GM12878 (cell line): ENCODE measurements at regions of chr3 and their contacts with region 1.

Region 1: DNA sequence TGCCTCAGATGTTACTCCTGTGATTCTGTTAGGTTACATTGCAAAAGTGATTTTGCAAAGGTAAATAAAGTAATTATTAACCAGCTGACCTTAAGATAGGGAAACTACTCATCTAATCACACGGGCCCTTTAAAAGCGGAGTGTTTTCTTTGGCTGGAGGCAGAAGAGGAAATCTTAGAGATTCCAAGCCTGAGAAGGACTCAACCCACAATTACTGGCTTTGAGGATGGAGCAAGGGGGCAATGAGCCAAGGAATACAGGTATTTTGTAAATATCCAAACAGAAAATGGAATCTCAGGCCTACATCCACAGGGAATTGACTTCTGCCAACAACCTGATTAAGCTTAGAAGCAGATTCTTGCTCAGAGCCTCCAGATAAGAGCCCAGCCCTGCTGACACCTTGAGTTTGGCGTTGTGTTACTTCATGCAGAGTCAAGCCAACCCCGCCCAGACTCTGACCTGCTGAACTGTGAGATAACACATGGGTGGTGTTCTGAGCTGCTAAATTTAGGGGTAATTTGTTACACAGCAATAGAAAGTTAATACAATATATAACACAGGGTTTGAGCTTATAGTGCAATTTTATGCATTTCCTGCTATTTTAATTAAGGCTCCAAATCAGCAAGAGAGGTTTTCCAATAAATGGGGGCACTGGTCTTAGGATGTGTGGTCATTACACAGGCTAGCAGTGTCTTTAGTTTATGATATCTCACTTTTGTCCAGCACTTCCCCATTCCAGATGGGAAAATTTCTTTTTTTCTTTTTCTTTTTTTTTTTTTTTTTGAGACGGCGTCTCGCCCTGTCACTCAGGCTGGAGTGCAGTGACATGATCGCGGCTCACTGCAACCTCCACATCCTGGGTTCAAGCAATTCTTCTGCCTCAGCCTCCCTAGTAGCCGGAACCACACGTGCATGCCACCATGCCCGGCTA is 19.5 kb downstream of the NFKBIZ start:
- DNase-seq: no peak
- ATAC-seq: peak; percentile 50
- H3K4me3 ChIP-seq: no peak overlapping the region
- H3K27ac ChIP-seq: no peak overlapping the region
- H3K4me1 ChIP-seq: no peaks in the 10 kb centered on the region
- H3K27me3 ChIP-seq: no peaks in the 10 kb centered on the region
- CTCF ChIP-seq: no peak
- EP300 ChIP-seq: no peak
- POLR2A ChIP-seq: no peak
- RAD21 ChIP-seq: no peak

Region 2: DNA sequence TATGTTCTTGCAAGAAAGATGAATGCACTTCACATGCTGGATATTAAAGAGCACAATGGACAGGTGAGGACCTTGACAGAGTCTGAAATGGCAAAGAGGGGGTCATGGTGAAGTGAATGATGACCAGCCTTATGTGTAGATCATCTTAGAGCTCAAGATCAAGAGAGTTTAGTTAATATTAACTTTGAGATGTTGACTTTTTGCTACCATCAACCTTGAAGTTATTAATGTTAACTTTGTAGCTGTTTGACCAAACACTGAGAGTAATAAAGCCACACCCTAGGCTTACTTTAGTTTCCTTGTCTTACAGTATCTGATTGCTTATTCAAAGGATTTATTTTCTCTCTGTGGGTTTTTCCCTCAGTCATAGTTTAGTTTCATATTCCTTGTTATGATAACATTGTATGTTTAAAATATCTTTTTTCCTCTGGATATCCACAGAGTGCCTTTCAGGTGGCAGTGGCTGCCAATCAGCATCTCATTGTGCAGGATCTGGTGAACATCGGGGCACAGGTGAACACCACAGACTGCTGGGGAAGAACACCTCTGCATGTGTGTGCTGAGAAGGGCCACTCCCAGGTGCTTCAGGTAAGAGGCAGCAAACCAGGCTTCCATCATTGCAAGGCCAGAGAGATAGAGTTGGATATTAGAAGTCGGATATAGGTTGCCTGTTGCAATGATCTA is 14.0 kb before region 1 on chr3:
- CTCF ChIA-PET with region 1: interaction called, 4 read pairs
- POLR2A ChIA-PET with region 1: interaction called, 3 read pairs
- RAD21 ChIA-PET with region 1: no interaction called
- SMC1A ChIA-PET with region 1: interaction called, 11 read pairs
- in situ Hi-C with region 1: no loop called
- intact Hi-C with region 1: no loop called
- DNase-seq: no peak
- ATAC-seq: no peak
- H3K4me3 ChIP-seq: no peak overlapping the region
- H3K27ac ChIP-seq: no peak overlapping the region
- H3K4me1 ChIP-seq: peaks cover 17% of the 10 kb centered on the region
- H3K27me3 ChIP-seq: no peaks in the 10 kb centered on the region
- CTCF ChIP-seq: no peak
- EP300 ChIP-seq: no peak
- POLR2A ChIP-seq: no peak
- RAD21 ChIP-seq: no peak

Region 3: GRCh38 chr3:101913173-101913572 is 44.4 kb after region 1 on chr3:
- CTCF ChIA-PET with region 1: no interaction called
- POLR2A ChIA-PET with region 1: no interaction called
- RAD21 ChIA-PET with region 1: no interaction called
- SMC1A ChIA-PET with region 1: no interaction called
- in situ Hi-C with region 1: no loop called
- intact Hi-C with region 1: loop called (anchors 1 kb)
- DNase-seq: no peak
- ATAC-seq: peak; percentile 49
- H3K4me3 ChIP-seq: no peak overlapping the region
- H3K27ac ChIP-seq: no peak overlapping the region
- H3K4me1 ChIP-seq: no peaks in the 10 kb centered on the region
- H3K27me3 ChIP-seq: no peaks in the 10 kb centered on the region
- CTCF ChIP-seq: no peak
- EP300 ChIP-seq: no peak
- POLR2A ChIP-seq: no peak
- RAD21 ChIP-seq: no peak

Region 4: GRCh38 chr3:102207151-102207571 is 338.4 kb after region 1 on chr3:
- CTCF ChIA-PET with region 1: no interaction called
- POLR2A ChIA-PET with region 1: no interaction called
- RAD21 ChIA-PET with region 1: no interaction called
- SMC1A ChIA-PET with region 1: no interaction called
- in situ Hi-C with region 1: no loop called
- intact Hi-C with region 1: no loop called
- DNase-seq: no peak
- ATAC-seq: no peak
- H3K4me3 ChIP-seq: no peak overlapping the region
- H3K27ac ChIP-seq: no peak overlapping the region
- H3K4me1 ChIP-seq: no peaks in the 10 kb centered on the region
- H3K27me3 ChIP-seq: no peaks in the 10 kb centered on the region
- CTCF ChIP-seq: no peak
- EP300 ChIP-seq: no peak
- POLR2A ChIP-seq: no peak
- RAD21 ChIP-seq: no peak